ENCODE measurements at regions of chr19 and their contacts with region 1.

Region 1: DNA sequence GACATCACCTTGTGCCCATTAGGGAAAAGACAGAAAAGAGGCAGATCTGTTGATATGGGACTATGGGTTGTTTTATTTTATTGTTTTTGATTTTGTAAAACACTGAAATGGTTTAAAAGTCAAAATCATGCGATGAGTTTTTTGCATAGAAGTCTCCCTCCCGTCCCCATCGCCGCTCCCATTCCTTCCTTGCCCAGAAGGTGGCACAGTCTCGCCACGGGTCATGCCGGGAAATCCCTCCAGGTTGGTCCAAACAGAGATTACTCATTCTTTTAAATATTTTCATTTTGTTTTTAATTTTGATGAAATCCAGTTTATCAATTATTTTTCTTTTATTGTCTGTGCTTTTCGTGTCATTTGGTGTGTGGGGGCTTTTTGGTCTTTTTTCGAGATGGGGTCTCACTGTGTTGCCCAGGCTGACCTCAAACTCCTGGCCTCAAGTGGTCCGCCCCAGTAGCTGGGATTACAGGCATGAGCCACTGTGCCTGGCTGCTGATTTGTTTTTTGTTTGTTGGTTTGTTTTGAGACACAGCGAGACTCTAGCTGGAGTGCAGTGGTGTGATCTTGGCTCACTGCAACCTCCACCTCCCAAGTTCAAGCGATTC is 9.2 kb downstream of the PGPEP1 start:
- DNase-seq: no peak
- H3K4me3 ChIP-seq: no peak overlapping the region
- H3K27me3 ChIP-seq: no peaks in the 10 kb centered on the region
- CTCF ChIP-seq: peak; percentile 88

Region 2: DNA sequence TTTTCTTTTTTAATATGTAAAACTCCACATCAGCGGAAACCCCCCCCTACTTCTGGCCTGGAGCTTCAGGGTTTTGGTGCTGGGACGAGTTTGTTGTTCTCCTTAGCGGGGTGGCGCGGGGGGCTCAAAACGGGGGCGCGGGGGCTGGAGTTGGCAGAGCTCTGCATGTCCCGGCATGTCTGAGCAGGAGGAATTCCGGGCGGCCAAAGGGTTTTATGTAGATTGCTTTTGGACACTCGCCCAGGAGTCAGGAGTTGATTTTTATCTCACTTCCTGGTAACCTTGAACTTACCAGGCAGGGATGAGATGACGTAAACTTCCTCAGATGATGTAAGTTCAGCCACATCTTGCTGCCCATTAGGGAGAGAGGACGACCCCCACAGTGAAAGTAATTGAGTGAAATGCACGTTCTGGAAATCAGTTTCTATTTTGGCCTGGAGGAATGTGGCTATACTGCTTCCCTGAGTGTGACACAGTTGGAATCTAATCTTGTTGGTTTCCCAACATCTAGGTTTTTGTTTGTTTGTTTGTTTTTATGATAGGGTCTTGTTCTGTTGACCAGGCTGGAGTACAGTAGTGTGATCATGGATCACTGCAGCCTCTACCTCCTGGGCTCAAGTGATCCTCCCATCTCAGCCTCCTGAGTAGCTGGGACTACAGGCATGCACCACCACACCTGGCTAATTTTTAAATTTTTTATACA is 15.4 kb after region 1 on chr19:
- CTCF ChIA-PET with region 1: interaction called, 57 read pairs
- POLR2A ChIA-PET with region 1: no interaction called
- DNase-seq: peak; percentile 99
- H3K4me3 ChIP-seq: no peak overlapping the region
- H3K27me3 ChIP-seq: no peaks in the 10 kb centered on the region
- CTCF ChIP-seq: no peak

Region 3: DNA sequence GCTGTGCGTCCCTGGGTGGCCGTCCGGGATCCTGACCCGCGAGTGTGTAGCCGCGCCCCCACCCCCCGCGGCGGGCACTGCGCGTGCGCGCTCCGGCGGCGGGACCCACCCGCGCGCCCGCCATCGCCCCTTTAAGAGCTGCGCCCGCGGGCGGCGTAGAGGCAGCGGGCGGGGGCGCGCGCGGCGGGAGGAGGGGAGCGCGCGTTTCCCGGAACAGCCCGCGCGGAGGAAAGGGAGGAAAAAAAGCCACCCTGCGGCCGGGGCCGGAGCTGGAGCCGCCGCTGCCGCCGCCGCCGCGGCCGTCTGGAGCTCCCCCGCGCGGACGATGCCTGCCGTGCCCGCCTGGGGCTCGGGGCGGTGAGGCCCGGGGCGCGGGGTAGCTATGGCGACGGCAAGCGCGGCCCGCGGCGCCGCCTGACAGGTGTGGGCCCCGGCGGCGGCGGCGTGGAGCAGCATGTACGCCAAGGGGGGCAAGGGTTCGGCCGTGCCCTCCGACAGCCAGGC is 69.6 kb after region 1 on chr19 and contains the start of gene SSBP4:
- CTCF ChIA-PET with region 1: interaction called, 126 read pairs
- POLR2A ChIA-PET with region 1: no interaction called
- DNase-seq: no peak
- H3K4me3 ChIP-seq: peak within 1 kb of the TSS; percentile 87
- H3K27me3 ChIP-seq: no peaks in the 10 kb centered on the region
- CTCF ChIP-seq: no peak
- polyA plus RNA-seq, gene SSBP4: 16.3 and 24.1 TPM in 2 replicates

Region 4: GRCh38 chr19:18450931-18451845 is 101.6 kb after region 1 on chr19:
- CTCF ChIA-PET with region 1: no interaction called
- POLR2A ChIA-PET with region 1: no interaction called
- DNase-seq: no peak
- H3K4me3 ChIP-seq: no peak overlapping the region
- H3K27me3 ChIP-seq: no peaks in the 10 kb centered on the region
- CTCF ChIP-seq: peak; percentile 98